ENCODE measurements at regions of chr12 and their contacts with region 1.

Region 1: GRCh38 chr12:56468216-56469006 is at the start of gene SPRYD4:
- DNase-seq: peak; percentile 96
- ATAC-seq: peak; percentile 90
- H3K4me3 Mint-ChIP-seq: peak within 1 kb of the TSS; percentile 91
- H3K27ac Mint-ChIP-seq: peak within 1 kb of the TSS; percentile 99
- H3K4me1 Mint-ChIP-seq: peaks cover 40% of the 10 kb centered on the region
- H3K27me3 Mint-ChIP-seq: no peaks in the 10 kb centered on the region
- total RNA-seq, gene SPRYD4: 3.1 TPM

Region 2: GRCh38 chr12:56152318-56153033 is 315.9 kb before region 1 on chr12 and contains the start of gene MYL6B:
- CTCF ChIA-PET with region 1: interaction called, 3 read pairs
- POLR2A ChIA-PET with region 1: no interaction called
- intact Hi-C with region 1: loop called in 1 of 2 experiments (anchors 1 kb)
- DNase-seq: peak; percentile 98
- ATAC-seq: peak; percentile 92
- H3K4me3 Mint-ChIP-seq: peak within 1 kb of the TSS; percentile 88
- H3K27ac Mint-ChIP-seq: peak within 1 kb of the TSS; percentile 99
- H3K4me1 Mint-ChIP-seq: peaks cover 29% of the 10 kb centered on the region
- H3K27me3 Mint-ChIP-seq: no peaks in the 10 kb centered on the region
- total RNA-seq, gene MYL6B: 76.3 to 79.3 TPM

Region 3: DNA sequence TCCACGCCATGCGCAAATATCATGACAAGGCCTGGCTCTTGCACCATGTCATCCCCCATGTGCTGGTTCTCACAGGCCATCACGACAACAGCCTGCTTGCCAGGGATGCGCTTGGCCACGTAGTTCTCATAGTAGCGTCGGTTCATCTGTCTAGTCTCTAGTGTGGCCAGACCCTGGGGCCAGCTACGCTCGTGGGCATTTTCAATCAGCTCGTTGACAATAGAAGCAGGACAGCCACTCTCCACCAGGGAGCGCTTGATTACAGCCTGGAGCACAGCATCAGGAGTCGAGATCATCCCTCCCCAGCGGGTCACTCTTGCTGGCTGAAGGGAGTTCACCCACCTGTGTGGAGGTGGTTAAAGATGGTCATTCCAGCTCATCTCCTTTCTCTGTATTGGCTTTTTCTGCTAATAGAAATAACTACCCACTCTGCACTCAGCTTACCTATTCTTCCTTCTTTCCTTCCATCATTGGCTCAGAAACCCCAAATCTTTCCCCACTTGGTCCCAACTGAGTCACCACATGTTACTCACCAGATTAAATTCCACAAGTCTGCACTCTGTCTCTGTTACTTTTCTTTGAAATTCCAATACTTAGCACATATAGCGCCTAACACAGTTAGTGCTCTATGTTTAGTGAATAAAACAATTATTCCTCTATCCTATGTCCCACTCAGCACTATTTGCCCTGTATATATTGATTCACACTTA is 261.8 kb before region 1 on chr12:
- CTCF ChIA-PET with region 1: interaction called, 16 read pairs
- POLR2A ChIA-PET with region 1: no interaction called
- intact Hi-C with region 1: loop called in 1 of 2 experiments (anchors 5 kb)
- DNase-seq: peak; percentile 69
- ATAC-seq: peak; percentile 84
- H3K4me3 Mint-ChIP-seq: no peak overlapping the region
- H3K27ac Mint-ChIP-seq: no peak overlapping the region
- H3K4me1 Mint-ChIP-seq: peaks cover 4% of the 10 kb centered on the region
- H3K27me3 Mint-ChIP-seq: no peaks in the 10 kb centered on the region

Region 4: GRCh38 chr12:56266693-56267442 is 201.5 kb before region 1 on chr12 and contains the start of gene COQ10A:
- CTCF ChIA-PET with region 1: interaction called, 7 read pairs
- POLR2A ChIA-PET with region 1: no interaction called
- intact Hi-C with region 1: loop called (anchors 1 to 10 kb)
- DNase-seq: peak; percentile 90
- ATAC-seq: peak; percentile 90
- H3K4me3 Mint-ChIP-seq: peak within 1 kb of the TSS; percentile 89
- H3K27ac Mint-ChIP-seq: peak within 1 kb of the TSS; percentile 89
- H3K4me1 Mint-ChIP-seq: peaks cover 9% of the 10 kb centered on the region
- H3K27me3 Mint-ChIP-seq: no peaks in the 10 kb centered on the region
- total RNA-seq, gene COQ10A: 5.2 to 7.5 TPM

Region 5: GRCh38 chr12:56315622-56316473 is 152.6 kb before region 1 on chr12 and contains the start of gene CNPY2:
- CTCF ChIA-PET with region 1: interaction called, 8 read pairs
- POLR2A ChIA-PET with region 1: interaction called, 3 read pairs
- intact Hi-C with region 1: loop called (anchors 1 kb)
- DNase-seq: peak; percentile 95
- ATAC-seq: peak; percentile 93
- H3K4me3 Mint-ChIP-seq: peak within 1 kb of the TSS; percentile 97
- H3K27ac Mint-ChIP-seq: peak within 1 kb of the TSS; percentile 95
- H3K4me1 Mint-ChIP-seq: peaks cover 18% of the 10 kb centered on the region
- H3K27me3 Mint-ChIP-seq: no peaks in the 10 kb centered on the region
- total RNA-seq, gene CNPY2: 77.4 to 82.6 TPM

Region 6: DNA sequence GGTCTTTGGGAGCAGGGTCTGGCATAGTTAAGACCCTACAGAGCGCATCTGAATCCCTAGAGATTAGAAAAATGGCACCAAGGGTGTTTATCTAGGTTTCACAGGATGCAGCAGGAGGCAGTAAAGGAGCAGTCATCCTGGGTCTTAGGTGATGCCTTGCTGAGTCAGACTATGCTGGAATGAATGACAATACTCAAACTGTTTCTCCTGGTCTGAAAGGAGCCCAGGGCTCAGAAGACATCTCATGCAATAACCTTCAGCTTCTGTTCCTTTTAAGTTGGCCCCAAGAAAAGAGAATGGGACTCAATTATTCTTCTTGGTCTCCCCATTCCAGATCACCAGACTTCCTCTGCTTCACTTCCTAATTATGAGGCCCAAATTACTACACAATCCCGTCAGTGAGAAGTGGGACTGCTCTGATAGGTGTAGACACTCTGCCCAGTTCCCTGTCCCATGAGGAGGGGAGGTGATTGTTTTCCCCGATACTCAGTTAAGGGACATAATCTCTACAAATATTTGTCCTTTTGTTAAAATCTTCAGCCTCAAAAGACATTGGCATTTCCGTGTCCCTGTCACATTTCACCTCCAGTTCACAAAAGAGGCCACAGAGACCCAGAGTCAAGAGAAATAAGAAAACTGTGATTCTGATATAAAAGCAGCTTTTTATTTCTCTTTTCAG is 91.0 kb before region 1 on chr12:
- CTCF ChIA-PET with region 1: interaction called, 6 read pairs
- POLR2A ChIA-PET with region 1: no interaction called
- intact Hi-C with region 1: loop called in 1 of 2 experiments (anchors 1 kb)
- DNase-seq: peak; percentile 27
- ATAC-seq: peak; percentile 98
- H3K4me3 Mint-ChIP-seq: no peak overlapping the region
- H3K27ac Mint-ChIP-seq: no peak overlapping the region
- H3K4me1 Mint-ChIP-seq: no peaks in the 10 kb centered on the region
- H3K27me3 Mint-ChIP-seq: no peaks in the 10 kb centered on the region

Region 7: DNA sequence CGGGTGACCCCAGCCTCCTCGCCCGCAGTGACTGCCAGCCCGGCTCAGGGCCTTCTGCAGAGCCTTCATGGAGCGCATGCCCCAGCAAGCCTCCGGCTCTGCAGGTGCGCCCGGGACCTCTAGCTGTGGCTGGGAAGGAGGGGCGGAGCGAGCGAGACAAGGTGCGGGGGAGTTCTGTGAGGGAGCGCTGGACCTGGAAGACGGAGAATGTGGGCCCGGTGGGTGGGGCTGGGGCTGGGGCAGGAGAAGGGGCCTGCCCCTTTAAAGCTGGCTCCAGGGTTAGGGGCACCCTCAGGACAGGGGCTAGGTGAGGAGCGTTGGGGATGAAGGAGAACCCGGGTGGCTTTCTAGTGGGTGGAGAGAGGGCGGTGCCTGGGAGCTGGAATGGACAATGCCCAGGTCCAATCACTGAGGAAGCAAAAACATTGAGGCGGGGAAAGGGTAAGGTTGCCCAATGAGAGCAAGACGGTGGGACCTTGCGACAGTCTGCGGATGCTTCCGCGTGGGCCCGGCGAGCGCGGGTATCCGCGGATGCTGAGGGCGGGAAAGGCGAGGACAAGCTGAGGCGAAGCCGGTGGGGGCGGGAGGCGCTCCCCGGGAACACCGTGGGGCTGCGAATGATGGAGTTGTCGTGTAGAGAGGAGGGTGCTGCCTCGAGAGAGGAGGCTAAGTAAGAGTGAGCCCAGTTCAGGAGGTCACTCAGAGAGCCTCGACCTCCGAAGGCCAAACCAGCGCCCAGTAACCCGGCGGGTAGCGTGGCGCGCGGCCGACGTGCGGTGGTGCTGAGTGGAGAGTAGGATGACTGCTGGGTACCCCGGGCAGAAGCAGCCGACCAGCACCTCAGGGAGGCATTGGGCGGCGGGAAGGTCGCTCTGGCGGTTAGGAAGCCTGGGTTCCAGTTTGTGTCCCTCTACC is 19.9 kb after region 1 on chr12 and contains the start of gene GLS2:
- CTCF ChIA-PET with region 1: interaction called, 8 read pairs
- POLR2A ChIA-PET with region 1: interaction called, 3 read pairs
- intact Hi-C with region 1: loop called in 1 of 2 experiments (anchors 1 kb)
- DNase-seq: peak; percentile 85
- ATAC-seq: peak; percentile 97
- H3K4me3 Mint-ChIP-seq: peak within 1 kb of the TSS; percentile 74
- H3K27ac Mint-ChIP-seq: peak within 1 kb of the TSS; percentile 73
- H3K4me1 Mint-ChIP-seq: peaks cover 16% of the 10 kb centered on the region
- H3K27me3 Mint-ChIP-seq: peaks cover 34% of the 10 kb centered on the region
- total RNA-seq, gene GLS2: 8.7 TPM

Region 8: DNA sequence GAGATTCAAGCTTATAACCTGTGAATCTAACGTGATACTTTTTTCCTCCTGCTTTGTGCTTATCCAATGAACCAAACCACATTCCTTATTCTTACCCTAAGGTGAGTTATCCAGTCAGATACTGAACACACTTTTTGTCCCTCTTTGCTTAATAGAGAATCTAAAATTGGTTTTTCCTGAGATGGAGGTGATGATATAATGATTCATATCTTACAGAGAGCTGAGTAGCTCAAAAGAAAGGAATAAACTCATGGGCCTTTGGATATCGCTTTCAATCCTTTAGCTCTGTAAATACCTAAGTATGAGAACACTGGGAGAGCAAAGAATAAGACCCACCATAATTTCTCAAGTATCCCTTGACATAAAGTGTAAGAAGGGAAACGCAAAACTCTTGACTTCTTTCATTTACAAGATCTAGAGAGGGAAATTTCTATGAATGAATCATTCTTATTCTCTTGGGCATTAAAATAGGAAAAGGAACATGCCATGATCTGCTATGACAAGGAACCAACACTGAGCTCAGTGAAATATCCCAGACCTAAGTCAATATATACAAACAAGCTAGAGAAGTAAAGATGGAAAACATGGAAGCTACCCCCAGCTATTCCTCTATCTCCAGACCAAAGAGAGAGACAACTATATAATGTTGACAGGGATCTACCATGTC is 864.4 kb after region 1 on chr12:
- CTCF ChIA-PET with region 1: no interaction called
- POLR2A ChIA-PET with region 1: no interaction called
- intact Hi-C with region 1: no loop called
- DNase-seq: no peak
- ATAC-seq: no peak
- H3K4me3 Mint-ChIP-seq: no peak overlapping the region
- H3K27ac Mint-ChIP-seq: no peak overlapping the region
- H3K4me1 Mint-ChIP-seq: peaks cover 2% of the 10 kb centered on the region
- H3K27me3 Mint-ChIP-seq: no peaks in the 10 kb centered on the region

Measured in activated CD4-positive, alpha-beta T cell treated with anti-CD3 and anti-CD28 coated beads for 36 hours (primary cell).